ENCODE measurements at regions of chr2 and their contacts with region 1.

Region 1: GRCh38 chr2:9333591-9334171 is 89.6 kb downstream of the ITGB1BP1 start:
- DNase-seq: peak; percentile 76 to 92
- H3K4me3 ChIP-seq: no peak overlapping the region
- H3K27ac ChIP-seq: peak overlapping the region; percentile 50
- H3K4me1 ChIP-seq: peaks cover 55% of the 10 kb centered on the region
- H3K27me3 ChIP-seq: no peaks in the 10 kb centered on the region
- CTCF ChIP-seq: peak; percentile 75

Region 2: DNA sequence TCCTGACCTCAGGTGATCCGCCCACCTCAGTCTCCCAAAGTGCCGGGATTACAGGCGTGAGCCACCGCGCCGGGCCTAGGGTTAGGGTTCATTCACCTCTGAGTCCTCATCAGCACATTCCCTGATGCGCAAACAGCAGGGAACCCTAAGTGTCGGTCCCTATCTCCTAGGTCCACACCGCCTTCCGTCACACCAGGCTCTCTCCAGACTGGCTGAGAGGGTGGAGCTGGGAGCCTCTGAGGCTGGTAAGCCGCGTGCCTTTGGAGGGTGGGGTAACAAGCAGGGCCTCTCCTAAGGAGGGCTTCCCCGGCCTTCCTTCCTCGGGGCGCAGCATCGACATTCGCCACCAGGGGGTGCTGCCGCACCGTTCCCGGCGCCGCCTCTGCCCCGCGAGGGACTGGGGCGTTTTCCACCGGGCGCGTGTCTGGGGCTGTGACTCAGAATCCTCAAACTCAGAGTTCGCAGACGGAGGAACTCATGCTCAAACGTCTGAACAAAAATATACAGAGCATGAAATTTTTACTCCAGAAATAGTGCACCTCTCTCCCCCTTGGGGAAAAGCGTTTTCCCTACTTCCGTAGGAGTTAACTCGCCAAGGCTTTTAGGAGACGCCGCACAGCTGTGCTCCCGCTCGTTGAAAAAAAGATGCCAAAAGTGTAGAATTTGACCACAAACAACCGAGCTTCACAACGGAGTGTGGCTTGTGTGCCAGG is 191.0 kb before region 1 on chr2:
- CTCF ChIA-PET with region 1: interaction called, 3 read pairs
- POLR2A ChIA-PET with region 1: no interaction called
- intact Hi-C with region 1: loop called (anchors 1 kb)
- DNase-seq: peak; percentile 85 to 97
- H3K4me3 ChIP-seq: peak overlapping the region; percentile 23; the same call in 1 of the 2 replicates
- H3K27ac ChIP-seq: peak overlapping the region; percentile 45
- H3K4me1 ChIP-seq: peaks cover 60% of the 10 kb centered on the region
- H3K27me3 ChIP-seq: no peaks in the 10 kb centered on the region
- CTCF ChIP-seq: peak; percentile 99

Region 3: DNA sequence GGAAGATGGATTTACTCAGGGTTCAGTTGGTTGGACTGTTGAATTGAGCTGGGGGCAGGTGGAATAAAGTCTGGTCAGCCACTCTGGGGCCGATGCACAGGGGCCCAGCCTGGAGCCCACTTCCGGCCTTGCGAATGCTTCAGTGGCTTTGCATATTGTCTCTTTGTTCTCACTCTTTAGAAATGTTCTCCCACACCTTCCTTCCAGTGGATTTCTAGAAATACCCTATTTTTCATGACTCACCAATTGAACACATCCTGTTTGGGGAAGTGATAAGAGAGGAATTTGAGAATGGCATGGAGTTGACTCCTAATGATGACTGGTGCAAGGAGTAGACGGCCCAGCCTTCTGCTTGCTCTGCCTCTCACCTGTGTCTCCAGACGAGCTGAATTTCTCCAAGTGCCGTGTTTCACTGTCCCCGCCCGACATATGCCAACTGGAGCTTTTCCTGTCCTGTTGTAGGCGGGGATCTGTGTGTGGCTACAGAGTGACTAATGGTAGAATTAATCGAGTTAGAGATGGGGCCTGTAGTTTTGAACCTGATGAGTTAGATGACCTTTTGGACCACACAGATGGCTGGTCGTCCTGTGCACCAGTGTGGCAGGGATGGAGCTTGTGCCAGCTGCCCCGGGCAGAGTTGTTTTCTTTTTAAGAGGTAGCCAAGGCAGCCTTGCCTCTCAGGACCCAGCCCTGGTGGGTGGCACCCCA is 98.8 kb before region 1 on chr2:
- CTCF ChIA-PET with region 1: no interaction called
- POLR2A ChIA-PET with region 1: interaction called, 4 read pairs
- intact Hi-C with region 1: loop called (anchors 1 kb)
- DNase-seq: peak; percentile 90 to 99
- H3K4me3 ChIP-seq: peak overlapping the region; percentile 59
- H3K27ac ChIP-seq: peak overlapping the region; percentile 98
- H3K4me1 ChIP-seq: peaks cover 93% of the 10 kb centered on the region
- H3K27me3 ChIP-seq: no peaks in the 10 kb centered on the region
- CTCF ChIP-seq: no peak

Region 4: DNA sequence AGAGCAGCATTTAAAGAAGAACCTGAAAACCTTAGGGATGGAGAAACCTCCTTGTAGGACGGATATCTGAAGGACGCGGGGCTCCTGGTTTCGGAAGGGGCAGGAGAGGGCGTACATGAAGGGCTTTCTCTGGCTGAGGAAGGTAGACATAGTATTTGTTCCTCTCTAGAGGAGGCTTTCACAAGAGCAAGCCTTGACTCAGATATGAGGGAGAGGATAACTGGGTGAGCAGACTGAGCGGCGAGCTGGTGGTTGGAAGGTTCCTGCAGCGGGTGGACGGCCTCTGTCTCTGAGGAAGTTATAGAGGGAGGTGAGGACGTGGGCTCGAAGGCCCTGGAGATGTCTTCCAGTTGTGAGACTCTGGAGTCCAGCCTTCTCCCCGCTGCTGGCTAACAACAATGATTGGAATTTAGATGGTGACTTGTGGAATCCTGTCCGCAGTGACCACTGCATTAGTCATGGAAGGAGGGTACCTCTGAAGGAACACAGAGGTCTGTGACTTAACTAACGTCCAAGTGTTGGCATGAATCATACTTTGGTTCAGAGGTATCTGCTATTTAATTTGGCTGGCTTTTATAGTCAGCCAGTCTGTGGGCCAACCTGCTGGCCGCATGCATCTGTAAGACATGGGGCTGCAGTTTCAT is 46.2 kb before region 1 on chr2:
- CTCF ChIA-PET with region 1: no interaction called
- POLR2A ChIA-PET with region 1: no interaction called
- intact Hi-C with region 1: loop called (anchors 1 kb)
- DNase-seq: peak; percentile 83 to 100
- H3K4me3 ChIP-seq: peak overlapping the region; percentile 33; the same call in 1 of the 2 replicates
- H3K27ac ChIP-seq: peak overlapping the region; percentile 96
- H3K4me1 ChIP-seq: peaks cover 59% of the 10 kb centered on the region
- H3K27me3 ChIP-seq: no peaks in the 10 kb centered on the region
- CTCF ChIP-seq: no peak

Region 5: DNA sequence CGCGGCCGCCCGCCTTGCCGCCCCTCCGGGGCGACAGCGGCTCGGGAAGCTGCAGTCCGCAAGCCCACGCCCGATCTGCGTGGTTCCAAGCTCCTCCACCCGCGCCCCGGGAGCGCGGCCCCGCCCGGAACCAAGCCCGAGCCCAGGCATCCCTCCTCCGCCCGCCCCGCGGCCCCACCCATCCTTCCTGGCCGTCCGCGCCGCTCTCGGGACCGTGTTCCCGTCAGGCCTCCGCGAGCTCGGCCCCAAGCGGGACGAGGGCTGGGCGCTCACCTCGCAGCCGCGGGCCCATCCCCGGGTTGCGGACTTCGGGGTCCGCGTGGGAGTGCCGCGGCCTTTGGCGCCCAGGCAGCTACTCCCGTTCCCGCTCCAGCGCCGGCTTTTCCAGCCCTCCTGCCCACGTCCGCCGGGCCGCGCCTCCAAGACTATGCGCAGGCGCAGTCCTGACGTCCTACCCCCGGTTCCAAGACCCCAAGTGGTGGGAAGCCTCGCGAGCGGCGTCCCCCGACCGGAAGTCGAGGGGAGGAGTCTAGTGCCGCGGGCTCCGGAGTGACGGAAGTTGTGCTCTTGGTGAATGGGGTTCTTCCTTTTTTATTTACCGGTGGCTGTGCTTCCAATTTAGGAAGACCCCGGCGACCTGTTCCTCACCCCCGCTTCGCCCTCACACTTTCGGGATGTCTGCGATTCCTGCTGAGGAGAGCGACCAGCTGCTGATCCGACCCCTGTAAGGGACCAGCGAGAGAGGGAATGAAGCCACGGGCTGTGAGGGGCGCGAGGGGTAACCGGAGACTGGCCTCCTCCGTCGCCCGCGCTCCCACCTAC is 89.6 kb after region 1 on chr2 and contains the starts of genes CPSF3 and ITGB1BP1:
- CTCF ChIA-PET with region 1: no interaction called
- POLR2A ChIA-PET with region 1: no interaction called
- intact Hi-C with region 1: loop called (anchors 5 kb)
- DNase-seq: peak; percentile 97 to 98
- H3K4me3 ChIP-seq: peak within 1 kb of the TSS; percentile 80
- H3K27ac ChIP-seq: peak within 1 kb of the TSS; percentile 24
- H3K4me1 ChIP-seq: peaks cover 22% of the 10 kb centered on the region
- H3K27me3 ChIP-seq: no peaks in the 10 kb centered on the region
- CTCF ChIP-seq: no peak
- total RNA-seq, gene CPSF3: 52.0 and 61.5 TPM in 2 replicates
- total RNA-seq, gene ITGB1BP1: 68.1 and 82.5 TPM in 2 replicates

Region 6: GRCh38 chr2:9630749-9631483 is 297.2 kb after region 1 on chr2 and contains the start of gene YWHAQ:
- CTCF ChIA-PET with region 1: no interaction called
- POLR2A ChIA-PET with region 1: interaction called, 36 read pairs
- intact Hi-C with region 1: no loop called
- DNase-seq: peak; percentile 93 to 98
- H3K4me3 ChIP-seq: peak within 1 kb of the TSS; percentile 91
- H3K27ac ChIP-seq: peak within 1 kb of the TSS; percentile 72
- H3K4me1 ChIP-seq: peaks cover 36% of the 10 kb centered on the region
- H3K27me3 ChIP-seq: no peaks in the 10 kb centered on the region
- CTCF ChIP-seq: no peak
- total RNA-seq, gene YWHAQ: 353 and 373 TPM in 2 replicates